ENCODE measurements at regions of chr13 and their contacts with region 1.

Region 1: GRCh38 chr13:26985285-26985878 is 186.2 kb downstream of the USP12 start:
- DNase-seq: peak in 4 of 5 donors; percentile 62 to 74 (median 70)
- ATAC-seq: peak in 3 of 4 donors; percentile 69 to 73 (median 73)
- H3K4me3 ChIP-seq: no peak overlapping the region
- H3K27ac ChIP-seq: peak overlapping the region in 1 of 12 donors; percentile 87
- H3K4me1 ChIP-seq: peaks cover 0 to 25% (median 12%) of the 10 kb centered on the region in 12 donors
- H3K27me3 ChIP-seq: no peaks in the 10 kb centered on the region
- CTCF ChIP-seq: peak; percentile 61 to 86 (median 79)
- POLR2A ChIP-seq: no peak

Region 2: DNA sequence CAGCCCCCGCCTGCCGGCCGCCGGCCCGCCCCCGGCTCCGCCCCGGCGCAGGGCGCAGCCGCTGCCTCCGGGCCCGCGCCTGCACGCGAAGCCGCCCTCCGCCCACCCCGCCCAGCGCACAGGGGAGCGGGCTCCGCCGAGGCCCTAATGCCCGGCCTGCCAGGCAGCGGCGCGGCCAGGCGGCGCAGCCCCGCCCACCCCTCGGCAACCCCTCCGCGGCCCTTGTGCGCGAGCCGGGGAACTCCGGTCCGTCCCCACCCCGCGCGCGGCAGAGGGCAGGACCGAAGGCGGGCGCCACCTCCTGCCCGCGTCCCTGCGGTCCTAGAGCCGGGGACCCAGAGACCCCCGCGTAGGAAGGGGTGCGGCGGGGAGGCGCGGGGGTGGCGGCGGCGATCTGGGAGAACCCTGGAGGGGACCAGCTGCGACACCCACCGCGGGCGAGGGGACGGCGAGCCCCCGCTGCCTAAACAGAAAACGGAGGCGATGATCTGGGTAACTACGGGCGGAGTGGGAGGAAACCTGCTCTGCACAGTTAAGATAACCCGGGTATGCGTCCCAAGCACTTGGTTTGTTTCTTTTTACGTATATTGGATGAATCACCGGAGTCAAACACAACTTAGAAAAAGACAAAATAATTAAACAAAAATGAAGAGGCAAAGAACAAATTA is 186.6 kb after region 1 on chr13:
- intact Hi-C with region 1: loop called in 7 of 10 experiments (anchors 5 to 10 kb)
- DNase-seq: peak; percentile 93 to 96 (median 95)
- ATAC-seq: peak; percentile 93 to 99 (median 96)
- H3K4me3 ChIP-seq: peak overlapping the region; percentile 22 to 93 (median 75)
- H3K27ac ChIP-seq: peak overlapping the region; percentile 76 to 99 (median 93)
- H3K4me1 ChIP-seq: peaks cover 8 to 54% (median 35%) of the 10 kb centered on the region in 12 donors
- H3K27me3 ChIP-seq: no peaks in the 10 kb centered on the region
- CTCF ChIP-seq: peak in 7 of 12 donors; percentile 16 to 48 (median 28)
- POLR2A ChIP-seq: no peak

Region 3: GRCh38 chr13:27251166-27252091 is 266.0 kb after region 1 on chr13 and contains the start of gene RPL21:
- intact Hi-C with region 1: loop called in 1 of 10 experiments (anchors 5 kb)
- DNase-seq: peak; percentile 96 to 99 (median 97)
- ATAC-seq: peak; percentile 99
- H3K4me3 ChIP-seq: peak within 1 kb of the TSS; percentile 69 to 96 (median 80)
- H3K27ac ChIP-seq: peak within 1 kb of the TSS; percentile 92 to 99 (median 96)
- H3K4me1 ChIP-seq: peaks cover 12 to 48% (median 26%) of the 10 kb centered on the region in 12 donors
- H3K27me3 ChIP-seq: no peaks in the 10 kb centered on the region
- CTCF ChIP-seq: no peak
- POLR2A ChIP-seq: peak in 1 of 2 donors; percentile 90
- total RNA-seq, gene RPL21: 292 to 825 (median 609) TPM

Region 4: GRCh38 chr13:27270594-27271520 is 285.5 kb after region 1 on chr13 and contains the start of gene RASL11A:
- intact Hi-C with region 1: loop called in 3 of 10 experiments (anchors 5 to 10 kb)
- DNase-seq: peak; percentile 87 to 94 (median 88)
- ATAC-seq: peak; percentile 77 to 95 (median 92)
- H3K4me3 ChIP-seq: peak within 1 kb of the TSS; percentile 49 to 96 (median 90)
- H3K27ac ChIP-seq: peak within 1 kb of the TSS; percentile 72 to 97 (median 90)
- H3K4me1 ChIP-seq: peaks cover 0 to 53% (median 26%) of the 10 kb centered on the region in 12 donors
- H3K27me3 ChIP-seq: peaks cover 0 to 9% (median 0%) of the 10 kb centered on the region in 9 donors
- CTCF ChIP-seq: peak; percentile 84 to 99 (median 95)
- POLR2A ChIP-seq: peak in 1 of 2 donors; percentile 92
- total RNA-seq, gene RASL11A: 2.9 to 13.7 (median 5.4) TPM

Region 5: DNA sequence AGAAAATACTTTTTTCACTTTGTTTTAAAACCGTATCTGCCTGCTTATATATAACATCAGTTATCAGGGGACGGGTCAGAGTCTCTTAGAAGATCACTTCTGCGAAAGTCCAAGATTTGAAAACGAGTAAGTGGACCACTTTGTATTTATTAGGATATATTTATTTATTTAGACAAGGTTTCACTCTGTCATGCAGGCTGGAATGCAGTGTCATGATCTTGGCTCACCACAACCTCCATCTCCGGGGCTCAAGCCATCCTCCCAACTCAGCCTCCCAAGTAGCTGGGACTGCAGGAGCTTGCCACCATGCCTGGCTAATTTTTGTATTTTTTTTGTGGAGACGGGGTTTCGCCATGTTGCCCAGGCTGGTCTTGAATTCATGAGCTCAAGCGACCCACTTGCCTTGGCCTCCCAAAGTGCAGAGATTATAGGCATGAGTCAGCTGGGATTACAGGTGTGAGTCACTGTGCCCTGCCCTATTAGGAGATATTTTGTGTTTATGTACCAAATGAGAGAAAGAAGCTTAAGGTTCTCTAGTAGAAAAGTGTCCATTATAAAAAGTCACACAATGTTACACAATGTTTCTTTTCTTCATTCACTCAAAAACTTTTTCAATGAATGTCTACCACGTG is 324.7 kb after region 1 on chr13:
- intact Hi-C with region 1: no loop called
- DNase-seq: no peak
- ATAC-seq: no peak
- H3K4me3 ChIP-seq: no peak overlapping the region
- H3K27ac ChIP-seq: no peak overlapping the region
- H3K4me1 ChIP-seq: no peaks in the 10 kb centered on the region
- H3K27me3 ChIP-seq: peaks cover 0 to 4% (median 0%) of the 10 kb centered on the region in 9 donors
- CTCF ChIP-seq: no peak
- POLR2A ChIP-seq: no peak

Region 6: GRCh38 chr13:27353166-27353583 is 367.8 kb after region 1 on chr13:
- intact Hi-C with region 1: loop called in 5 of 10 experiments (anchors 2 kb)
- DNase-seq: no peak
- ATAC-seq: no peak
- H3K4me3 ChIP-seq: no peak overlapping the region
- H3K27ac ChIP-seq: peak overlapping the region in 1 of 12 donors; percentile 66
- H3K4me1 ChIP-seq: peaks cover 0 to 16% (median 0%) of the 10 kb centered on the region in 12 donors
- H3K27me3 ChIP-seq: peaks cover 0 to 7% (median 0%) of the 10 kb centered on the region in 9 donors
- CTCF ChIP-seq: no peak
- POLR2A ChIP-seq: no peak

Region 7: GRCh38 chr13:27826379-27827353 is 841.3 kb after region 1 on chr13:
- intact Hi-C with region 1: loop called in 4 of 10 experiments (anchors 2 to 10 kb)
- DNase-seq: peak; percentile 68 to 87 (median 73)
- ATAC-seq: peak; percentile 75 to 94 (median 90)
- H3K4me3 ChIP-seq: peak overlapping the region in 7 of 12 donors; percentile 15 to 43 (median 21)
- H3K27ac ChIP-seq: no peak overlapping the region
- H3K4me1 ChIP-seq: peaks cover 0 to 16% (median 4%) of the 10 kb centered on the region in 12 donors
- H3K27me3 ChIP-seq: peaks cover 10 to 87% (median 65%) of the 10 kb centered on the region in 9 donors
- CTCF ChIP-seq: peak; percentile 82 to 97 (median 89)
- POLR2A ChIP-seq: no peak